Activated T-helper 1 cell treated with anti-CD3 and anti-CD28 coated beads, Interleukin-12 subunit alpha, Interleukin-12 subunit beta, Interleukin-2, Interleukin-4 antibody, amounts not matched to agents 30 ng/mL and 10 ng/mL and 1 ng/mL, durations not matched to agents 14 hours and 24 hours and 36 hours (primary cell): ENCODE measurements at regions of chr1 and their contacts with region 1.

Region 1: DNA sequence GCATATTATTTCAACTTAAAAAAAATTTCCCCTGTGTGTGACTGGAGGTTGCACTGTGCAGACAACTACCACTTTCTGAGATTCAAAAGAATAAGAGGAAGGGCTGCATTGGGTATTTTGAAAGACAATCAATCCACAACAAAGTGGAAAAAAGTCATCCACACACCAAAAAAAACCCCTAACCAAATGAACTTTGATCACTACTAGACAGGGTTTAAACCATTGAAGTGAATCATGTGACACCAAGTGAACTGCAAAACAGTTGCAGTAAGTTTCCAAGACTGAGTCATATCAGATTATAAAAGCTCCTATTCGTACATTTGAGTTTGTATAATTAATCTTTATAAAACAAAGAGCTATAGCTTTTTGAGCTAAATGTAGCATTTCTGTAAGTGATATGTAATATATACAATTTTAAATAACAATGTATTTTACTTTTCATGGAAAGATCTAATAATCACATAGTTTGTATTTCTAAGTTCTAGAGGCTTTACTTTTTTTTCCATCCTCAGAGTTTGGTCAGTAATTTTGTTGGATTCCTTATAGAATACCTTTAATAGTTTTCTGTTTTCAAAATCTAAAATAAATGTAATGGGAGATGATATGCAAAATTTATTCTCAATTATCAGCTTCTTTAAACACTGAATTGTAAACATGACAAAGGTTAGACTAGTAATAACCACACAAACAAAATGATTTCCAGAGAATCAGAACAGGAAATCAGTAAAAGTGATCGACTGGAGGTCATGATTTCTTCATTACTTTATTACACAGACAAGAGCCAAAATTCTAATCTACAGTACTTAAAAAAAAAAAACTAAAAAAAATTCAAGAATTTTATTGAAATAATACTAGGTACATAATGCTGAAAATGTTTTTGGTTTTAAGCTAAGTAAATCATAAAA is 50.5 kb upstream of the GFI1 start:
- DNase-seq: peak; percentile 51
- H3K4me3 Mint-ChIP-seq: peak overlapping the region; percentile 60
- H3K27ac Mint-ChIP-seq: peak overlapping the region; percentile 92
- H3K4me1 Mint-ChIP-seq: peaks cover 86% of the 10 kb centered on the region
- H3K27me3 Mint-ChIP-seq: no peaks in the 10 kb centered on the region

Region 2: GRCh38 chr1:91428182-91428798 is 1108.9 kb before region 1 on chr1:
- intact Hi-C with region 1: no loop called
- DNase-seq: no peak
- H3K4me3 Mint-ChIP-seq: no peak overlapping the region
- H3K27ac Mint-ChIP-seq: no peak overlapping the region
- H3K4me1 Mint-ChIP-seq: no peaks in the 10 kb centered on the region
- H3K27me3 Mint-ChIP-seq: peaks cover 13% of the 10 kb centered on the region

Region 3: GRCh38 chr1:91712981-91713841 is 824.0 kb before region 1 on chr1:
- intact Hi-C with region 1: loop called (anchors 2 kb)
- DNase-seq: peak; percentile 52
- H3K4me3 Mint-ChIP-seq: peak overlapping the region; percentile 61
- H3K27ac Mint-ChIP-seq: peak overlapping the region; percentile 94
- H3K4me1 Mint-ChIP-seq: peaks cover 59% of the 10 kb centered on the region
- H3K27me3 Mint-ChIP-seq: peaks cover 4% of the 10 kb centered on the region

Region 4: GRCh38 chr1:91876040-91876470 is 661.2 kb before region 1 on chr1:
- intact Hi-C with region 1: loop called (anchors 2 kb)
- DNase-seq: no peak
- H3K4me3 Mint-ChIP-seq: peak overlapping the region; percentile 37
- H3K27ac Mint-ChIP-seq: peak overlapping the region; percentile 71
- H3K4me1 Mint-ChIP-seq: peaks cover 72% of the 10 kb centered on the region
- H3K27me3 Mint-ChIP-seq: peaks cover 6% of the 10 kb centered on the region

Region 5: DNA sequence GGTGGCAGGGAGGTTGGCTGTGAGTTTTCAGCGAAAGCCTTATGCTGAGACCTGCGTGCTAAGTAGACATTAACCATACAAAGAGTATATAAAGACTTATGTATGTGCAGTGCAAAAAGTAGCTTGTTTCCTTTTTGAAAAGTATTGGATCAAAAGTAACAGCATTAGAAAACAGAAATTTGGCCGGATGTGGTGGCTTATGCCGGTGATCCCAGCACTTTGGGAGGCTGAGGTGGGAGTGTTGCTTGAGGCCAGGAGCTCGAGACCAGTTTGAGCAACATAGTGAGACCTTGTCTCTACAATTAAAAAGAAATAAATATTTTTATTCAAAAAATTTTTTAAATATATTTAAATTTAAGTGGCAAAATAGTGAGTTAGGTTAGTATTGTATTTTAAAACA is 236.2 kb before region 1 on chr1:
- intact Hi-C with region 1: no loop called
- DNase-seq: no peak
- H3K4me3 Mint-ChIP-seq: no peak overlapping the region
- H3K27ac Mint-ChIP-seq: no peak overlapping the region
- H3K4me1 Mint-ChIP-seq: peaks cover 37% of the 10 kb centered on the region
- H3K27me3 Mint-ChIP-seq: no peaks in the 10 kb centered on the region

Region 6: GRCh38 chr1:92365378-92366039 is 171.7 kb before region 1 on chr1:
- intact Hi-C with region 1: loop called (anchors 1 kb)
- DNase-seq: peak; percentile 10
- H3K4me3 Mint-ChIP-seq: peak overlapping the region; percentile 3
- H3K27ac Mint-ChIP-seq: peak overlapping the region; percentile 76
- H3K4me1 Mint-ChIP-seq: peaks cover 59% of the 10 kb centered on the region
- H3K27me3 Mint-ChIP-seq: no peaks in the 10 kb centered on the region

Region 7: GRCh38 chr1:92556350-92556749 is 19.1 kb after region 1 on chr1:
- intact Hi-C with region 1: loop called (anchors 1 kb)
- DNase-seq: no peak
- H3K4me3 Mint-ChIP-seq: no peak overlapping the region
- H3K27ac Mint-ChIP-seq: peak overlapping the region; percentile 78
- H3K4me1 Mint-ChIP-seq: peaks cover 45% of the 10 kb centered on the region
- H3K27me3 Mint-ChIP-seq: no peaks in the 10 kb centered on the region

Region 8: GRCh38 chr1:92975551-92976232 is 438.5 kb after region 1 on chr1:
- intact Hi-C with region 1: loop called (anchors 5 kb)
- DNase-seq: no peak
- H3K4me3 Mint-ChIP-seq: peak overlapping the region; percentile 3
- H3K27ac Mint-ChIP-seq: peak overlapping the region; percentile 70
- H3K4me1 Mint-ChIP-seq: peaks cover 80% of the 10 kb centered on the region
- H3K27me3 Mint-ChIP-seq: no peaks in the 10 kb centered on the region